IMR-90 (cell line): ENCODE measurements at regions of chr10 and their contacts with region 1.

Region 1: GRCh38 chr10:31808258-31809218 is 120.1 kb downstream of the ARHGAP12 start:
- DNase-seq: peak; percentile 80
- ATAC-seq: peak; percentile 74
- H3K4me3 ChIP-seq: peak overlapping the region; percentile 45
- H3K27ac ChIP-seq: peak overlapping the region; percentile 94
- H3K4me1 ChIP-seq: peaks cover 2% of the 10 kb centered on the region
- H3K27me3 ChIP-seq: no peaks in the 10 kb centered on the region
- CTCF ChIP-seq: peak; percentile 66
- POLR2A ChIP-seq: no peak
- RAD21 ChIP-seq: peak; percentile 85

Region 2: DNA sequence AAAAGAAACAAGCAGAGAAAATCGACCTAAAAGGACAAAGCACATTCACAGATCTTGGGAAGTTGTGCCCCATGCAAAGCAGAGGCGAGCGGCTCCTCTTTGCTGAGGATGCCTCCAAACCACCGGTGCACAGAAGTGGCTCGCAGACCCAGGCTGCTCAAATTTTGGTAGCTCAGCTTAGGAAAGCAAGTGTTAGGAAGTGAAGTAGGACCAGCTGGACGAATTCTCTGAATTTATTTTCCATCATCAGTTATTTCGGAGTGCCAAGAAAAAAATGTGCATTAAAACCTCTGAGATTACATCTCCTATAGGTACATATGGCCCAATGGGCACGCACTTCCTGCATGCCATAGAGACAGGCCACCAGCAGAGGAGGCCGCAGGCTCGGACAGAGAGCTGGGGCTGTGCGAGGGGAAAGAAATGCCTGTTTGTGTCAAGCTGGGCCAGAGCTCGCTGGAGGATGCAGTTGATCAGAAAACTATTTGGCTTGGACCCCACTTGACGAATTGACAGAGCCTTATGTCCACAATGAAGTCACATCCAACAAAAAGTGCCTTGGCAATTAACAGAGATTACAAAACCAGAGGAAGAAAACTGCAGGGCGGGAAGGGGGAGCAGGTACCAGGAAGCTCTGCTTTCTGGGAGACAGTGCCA is 1056.7 kb before region 1 on chr10:
- CTCF ChIA-PET with region 1: interaction called, 11 read pairs
- POLR2A ChIA-PET with region 1: no interaction called
- dilution Hi-C with region 1: no loop called
- in situ Hi-C with region 1: loop called (anchors 10 kb)
- intact Hi-C with region 1: loop called (anchors 2 kb)
- DNase-seq: peak; percentile 75
- ATAC-seq: peak; percentile 92
- H3K4me3 ChIP-seq: no peak overlapping the region
- H3K27ac ChIP-seq: peak overlapping the region; percentile 2; the same call in 1 of the 2 replicates
- H3K4me1 ChIP-seq: peaks cover 16% of the 10 kb centered on the region
- H3K27me3 ChIP-seq: no peaks in the 10 kb centered on the region
- CTCF ChIP-seq: peak; percentile 98
- POLR2A ChIP-seq: peak; percentile 55
- RAD21 ChIP-seq: peak; percentile 100

Region 3: GRCh38 chr10:31031558-31032257 is 776.8 kb before region 1 on chr10 and contains the start of gene ZNF438:
- CTCF ChIA-PET with region 1: no interaction called
- POLR2A ChIA-PET with region 1: no interaction called
- dilution Hi-C with region 1: no loop called
- in situ Hi-C with region 1: no loop called
- intact Hi-C with region 1: loop called (anchors 2 kb)
- DNase-seq: peak; percentile 95
- ATAC-seq: peak; percentile 92
- H3K4me3 ChIP-seq: peak within 1 kb of the TSS; percentile 75
- H3K27ac ChIP-seq: peak within 1 kb of the TSS; percentile 96
- H3K4me1 ChIP-seq: peaks cover 14% of the 10 kb centered on the region
- H3K27me3 ChIP-seq: no peaks in the 10 kb centered on the region
- CTCF ChIP-seq: peak; percentile 53
- POLR2A ChIP-seq: peak; percentile 74; the same call in 1 of the 2 replicates
- RAD21 ChIP-seq: peak; percentile 60
- total RNA-seq, gene ZNF438: 2.8 and 2.9 TPM in 2 replicates

Region 4: GRCh38 chr10:31340343-31340742 is 468.2 kb before region 1 on chr10:
- CTCF ChIA-PET with region 1: no interaction called
- POLR2A ChIA-PET with region 1: no interaction called
- dilution Hi-C with region 1: no loop called
- in situ Hi-C with region 1: loop called (anchors 25 kb)
- intact Hi-C with region 1: no loop called
- DNase-seq: no peak
- ATAC-seq: no peak
- H3K4me3 ChIP-seq: no peak overlapping the region
- H3K27ac ChIP-seq: no peak overlapping the region
- H3K4me1 ChIP-seq: peaks cover under 1% of the 10 kb centered on the region; the same call in 1 of the 2 replicates
- H3K27me3 ChIP-seq: no peaks in the 10 kb centered on the region
- CTCF ChIP-seq: no peak
- POLR2A ChIP-seq: no peak
- RAD21 ChIP-seq: no peak

Region 5: DNA sequence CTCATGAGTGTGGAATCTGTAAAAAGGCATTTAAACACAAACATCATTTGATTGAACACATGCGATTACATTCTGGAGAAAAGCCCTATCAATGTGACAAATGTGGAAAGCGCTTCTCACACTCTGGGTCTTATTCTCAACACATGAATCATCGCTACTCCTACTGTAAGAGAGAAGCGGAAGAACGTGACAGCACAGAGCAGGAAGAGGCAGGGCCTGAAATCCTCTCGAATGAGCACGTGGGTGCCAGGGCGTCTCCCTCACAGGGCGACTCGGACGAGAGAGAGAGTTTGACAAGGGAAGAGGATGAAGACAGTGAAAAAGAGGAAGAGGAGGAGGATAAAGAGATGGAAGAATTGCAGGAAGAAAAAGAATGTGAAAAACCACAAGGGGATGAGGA is 281.9 kb before region 1 on chr10:
- CTCF ChIA-PET with region 1: no interaction called
- POLR2A ChIA-PET with region 1: no interaction called
- dilution Hi-C with region 1: no loop called
- in situ Hi-C with region 1: no loop called
- intact Hi-C with region 1: loop called (anchors 5 kb)
- DNase-seq: peak; percentile 27
- ATAC-seq: no peak
- H3K4me3 ChIP-seq: no peak overlapping the region
- H3K27ac ChIP-seq: no peak overlapping the region
- H3K4me1 ChIP-seq: no peaks in the 10 kb centered on the region; the same call in 1 of the 2 replicates
- H3K27me3 ChIP-seq: no peaks in the 10 kb centered on the region
- CTCF ChIP-seq: no peak
- POLR2A ChIP-seq: no peak
- RAD21 ChIP-seq: no peak